ENCODE measurements at regions of chr2 and their contacts with region 1.

Region 1: DNA sequence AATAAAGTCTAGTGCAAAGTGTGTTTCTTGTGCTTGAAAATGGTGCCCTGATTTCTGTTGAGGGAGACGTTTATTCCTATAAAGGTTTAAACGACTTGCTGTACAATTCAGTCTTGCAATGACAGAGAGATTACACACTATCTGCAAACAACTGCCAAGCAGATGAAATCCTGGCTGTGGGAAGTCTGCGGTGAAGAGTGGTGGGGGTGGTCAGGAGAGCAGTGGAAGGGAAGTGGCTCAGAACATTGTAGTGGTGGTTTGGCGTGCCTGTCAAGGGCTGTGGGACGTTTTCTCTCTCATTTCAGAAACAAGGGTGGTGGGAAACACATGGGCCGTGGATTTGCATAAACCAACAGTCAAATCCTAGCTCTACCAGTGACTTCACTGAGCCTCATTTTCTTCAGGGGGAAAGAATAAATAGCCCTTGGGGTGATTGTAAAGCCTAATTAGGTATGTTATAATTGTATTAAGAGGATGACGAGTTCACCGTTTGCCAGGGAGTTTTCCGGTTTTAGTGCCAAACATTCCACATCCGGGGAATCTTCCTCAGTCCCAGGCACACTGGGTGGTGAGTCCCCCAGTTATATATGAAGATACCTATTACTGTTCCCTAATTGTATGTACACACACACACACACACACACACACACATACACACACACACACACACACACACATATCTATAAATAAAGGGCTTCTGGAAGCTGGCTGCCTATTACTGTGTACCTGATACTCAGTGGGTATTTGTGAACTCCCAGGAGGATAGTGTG is 115.0 kb downstream of the SPTBN1 start:
- DNase-seq: peak; percentile 87
- H3K4me3 Mint-ChIP-seq: peak overlapping the region; percentile 63
- H3K27ac Mint-ChIP-seq: peak overlapping the region; percentile 94
- H3K4me1 Mint-ChIP-seq: peaks cover 68% of the 10 kb centered on the region
- H3K27me3 Mint-ChIP-seq: no peaks in the 10 kb centered on the region
- CTCF ChIP-seq: no peak

Region 2: GRCh38 chr2:54551123-54551756 is 19.9 kb before region 1 on chr2:
- CTCF ChIA-PET with region 1: interaction called, 4 read pairs
- POLR2A ChIA-PET with region 1: interaction called, 427 read pairs
- intact Hi-C with region 1: no loop called
- DNase-seq: no peak
- H3K4me3 Mint-ChIP-seq: no peak overlapping the region
- H3K27ac Mint-ChIP-seq: no peak overlapping the region
- H3K4me1 Mint-ChIP-seq: peaks cover 34% of the 10 kb centered on the region
- H3K27me3 Mint-ChIP-seq: no peaks in the 10 kb centered on the region
- CTCF ChIP-seq: no peak

Region 3: DNA sequence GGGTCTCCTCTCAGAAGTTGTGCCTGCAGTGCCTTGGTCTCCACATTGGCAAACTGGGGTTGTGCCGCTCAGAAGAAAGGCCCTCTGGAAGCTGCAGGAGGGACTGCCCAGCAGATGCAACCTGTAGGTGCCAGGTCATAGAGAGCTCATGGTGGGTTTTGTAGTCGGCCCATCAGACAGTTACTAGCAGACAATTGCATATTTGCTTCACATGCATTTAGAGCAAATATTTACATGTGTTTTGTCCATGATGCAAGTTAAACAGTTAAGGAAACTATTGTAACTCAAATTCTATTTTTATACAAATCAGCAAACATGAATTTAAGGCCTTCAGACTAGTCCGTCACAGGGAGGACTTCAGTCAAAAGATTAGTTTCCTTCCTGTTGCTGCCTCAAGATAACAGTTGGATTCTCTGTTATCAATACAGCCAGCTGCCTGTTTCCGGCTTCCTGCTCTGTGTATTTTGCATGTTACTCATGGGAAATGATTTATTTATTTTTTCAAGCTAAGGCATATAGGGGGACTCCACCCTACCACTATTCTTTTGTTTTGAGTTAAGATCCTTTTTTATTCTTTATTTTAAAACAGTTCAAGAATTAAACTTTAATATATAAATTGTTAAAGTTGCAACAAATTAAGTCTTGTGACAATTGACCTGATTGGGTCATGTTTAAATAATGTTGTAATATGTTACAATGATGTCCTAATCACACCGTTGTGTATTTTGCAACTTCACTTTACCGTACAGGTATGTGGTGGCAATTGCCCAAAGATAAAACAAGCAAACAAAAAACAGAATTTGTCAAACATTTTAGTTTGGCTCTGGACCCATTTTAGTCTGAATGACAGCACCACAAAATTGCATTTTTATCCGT is 18.5 kb after region 1 on chr2:
- CTCF ChIA-PET with region 1: interaction called, 7 read pairs
- POLR2A ChIA-PET with region 1: interaction called, 33 read pairs
- intact Hi-C with region 1: no loop called
- DNase-seq: peak; percentile 65
- H3K4me3 Mint-ChIP-seq: peak overlapping the region; percentile 0
- H3K27ac Mint-ChIP-seq: peak overlapping the region; percentile 1
- H3K4me1 Mint-ChIP-seq: peaks cover 55% of the 10 kb centered on the region
- H3K27me3 Mint-ChIP-seq: no peaks in the 10 kb centered on the region
- CTCF ChIP-seq: no peak

Region 4: GRCh38 chr2:54597153-54597848 is 26.2 kb after region 1 on chr2:
- CTCF ChIA-PET with region 1: interaction called, 7 read pairs
- POLR2A ChIA-PET with region 1: interaction called, 34 read pairs
- intact Hi-C with region 1: no loop called
- DNase-seq: peak; percentile 27
- H3K4me3 Mint-ChIP-seq: no peak overlapping the region
- H3K27ac Mint-ChIP-seq: peak overlapping the region; percentile 57
- H3K4me1 Mint-ChIP-seq: peaks cover 40% of the 10 kb centered on the region
- H3K27me3 Mint-ChIP-seq: no peaks in the 10 kb centered on the region
- CTCF ChIP-seq: no peak